ENCODE measurements at regions of chr11 and their contacts with region 1.

Region 1: DNA sequence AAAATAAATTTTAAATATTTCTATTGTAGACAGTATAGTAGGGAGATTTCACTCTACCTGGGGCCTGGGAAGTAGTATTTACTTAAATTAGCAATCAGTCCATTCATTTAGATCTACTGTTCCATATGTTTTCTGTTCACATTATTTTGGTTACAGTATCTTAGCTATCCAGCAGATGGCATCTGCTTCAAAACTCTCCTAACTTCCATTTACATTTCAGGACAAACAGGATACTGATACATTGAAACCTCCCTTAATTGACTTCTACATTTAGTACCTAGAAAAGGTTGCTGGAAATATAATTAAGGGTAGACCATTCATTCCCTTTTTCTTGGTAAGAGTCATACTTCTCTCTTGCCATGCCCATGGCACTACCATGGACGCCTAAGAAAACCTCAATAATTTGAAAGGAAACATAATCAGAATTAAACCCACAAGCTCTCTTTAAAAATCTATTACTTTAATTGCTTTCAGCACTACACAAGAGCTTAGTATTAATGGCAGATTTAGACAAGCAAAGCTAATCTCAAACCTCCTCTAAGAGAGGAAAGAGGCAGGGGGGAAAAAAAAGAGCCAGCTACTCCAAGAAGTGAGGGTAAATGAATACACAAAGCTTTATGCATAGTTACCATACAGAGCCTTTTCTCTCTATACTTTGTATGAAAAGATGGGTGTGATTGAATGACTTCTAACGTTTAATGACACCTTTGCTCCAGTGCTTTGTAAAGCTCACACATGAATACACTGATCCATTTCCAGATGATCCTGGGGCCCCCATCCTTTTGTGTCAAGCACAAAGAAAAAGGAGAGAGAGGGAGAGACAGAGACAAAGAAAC is 131.2 kb upstream of the MTMR2 start:
- DNase-seq: no peak
- H3K4me3 ChIP-seq: no peak overlapping the region
- H3K27ac ChIP-seq: no peak overlapping the region
- H3K4me1 ChIP-seq: peaks cover 5% of the 10 kb centered on the region
- H3K27me3 ChIP-seq: no peaks in the 10 kb centered on the region
- CTCF ChIP-seq: peak; percentile 33 to 49 (median 41)
- POLR2A ChIP-seq: no peak

Region 2: GRCh38 chr11:96112201-96113128 is 57.4 kb after region 1 on chr11:
- intact Hi-C with region 1: no loop called
- DNase-seq: no peak
- H3K4me3 ChIP-seq: no peak overlapping the region
- H3K27ac ChIP-seq: peak overlapping the region in 1 of 2 donors; percentile 43
- H3K4me1 ChIP-seq: no peaks in the 10 kb centered on the region
- H3K27me3 ChIP-seq: no peaks in the 10 kb centered on the region
- CTCF ChIP-seq: no peak
- POLR2A ChIP-seq: no peak

Region 3: DNA sequence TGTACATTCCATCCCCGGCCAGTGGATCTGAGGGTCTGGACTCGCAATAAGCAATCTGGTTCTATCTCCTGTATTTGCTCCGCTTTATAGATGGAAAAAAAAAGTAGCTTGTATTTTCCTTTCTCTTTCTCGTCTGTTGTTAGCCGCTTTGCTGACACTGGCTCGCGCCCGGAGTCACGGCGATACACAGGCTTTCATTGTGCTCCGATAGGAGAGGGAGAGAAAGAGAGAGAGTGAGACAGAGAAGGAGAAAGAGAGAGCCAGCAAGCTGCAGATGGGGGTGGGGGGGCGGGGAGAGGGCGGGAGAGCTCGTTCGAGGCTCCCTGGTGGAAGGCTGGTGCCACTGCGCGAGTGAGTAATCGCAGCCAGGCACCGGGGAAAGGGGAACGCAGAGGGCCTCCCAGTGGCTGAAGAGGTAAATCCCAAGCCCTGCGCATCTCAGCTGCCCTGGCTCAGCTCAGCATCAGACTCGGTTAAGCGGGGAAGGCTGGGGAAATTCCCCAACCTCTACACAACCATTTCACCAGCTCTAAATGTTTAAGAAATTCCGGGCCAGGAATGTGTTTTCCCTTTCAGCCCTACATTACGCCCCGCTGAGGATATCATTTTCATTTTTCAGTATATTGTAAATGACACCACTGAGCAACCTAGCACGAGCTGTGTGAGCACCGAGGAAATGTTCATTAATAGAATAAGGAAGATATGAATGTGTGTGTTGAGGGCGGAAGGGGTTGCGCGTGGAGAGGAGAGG is 288.0 kb after region 1 on chr11 and contains the start of gene MAML2:
- intact Hi-C with region 1: loop called (anchors 10 kb)
- DNase-seq: peak; percentile 95
- H3K4me3 ChIP-seq: peak within 1 kb of the TSS; percentile 69
- H3K27ac ChIP-seq: peak within 1 kb of the TSS; percentile 79 to 86
- H3K4me1 ChIP-seq: peaks cover 33% of the 10 kb centered on the region
- H3K27me3 ChIP-seq: no peaks in the 10 kb centered on the region
- CTCF ChIP-seq: peak; percentile 62 to 86 (median 83)
- POLR2A ChIP-seq: no peak
- total RNA-seq, gene MAML2: 17.6 to 23.6 TPM